CD4-positive, alpha-beta T cell (primary cell): ENCODE measurements at regions of chr10 and their contacts with region 1.

Region 1: GRCh38 chr10:32556783-32557395 is 110.9 kb downstream of the CCDC7 start:
- DNase-seq: no peak
- ATAC-seq: no peak
- H3K4me3 ChIP-seq: no peak overlapping the region
- H3K4me3 Mint-ChIP-seq: no peak overlapping the region
- H3K27ac ChIP-seq: no peak overlapping the region
- H3K27ac Mint-ChIP-seq: no peak overlapping the region
- H3K4me1 ChIP-seq: no peaks in the 10 kb centered on the region
- H3K4me1 Mint-ChIP-seq: peaks cover 13% of the 10 kb centered on the region
- H3K27me3 ChIP-seq: no peaks in the 10 kb centered on the region
- H3K27me3 Mint-ChIP-seq: no peaks in the 10 kb centered on the region
- CTCF ChIP-seq: no peak

Region 2: GRCh38 chr10:31908157-31908556 is 648.7 kb before region 1 on chr10:
- CTCF ChIA-PET with region 1: no interaction called
- POLR2A ChIA-PET with region 1: no interaction called
- intact Hi-C with region 1: no loop called
- DNase-seq: no peak
- ATAC-seq: no peak
- H3K4me3 ChIP-seq: no peak overlapping the region
- H3K4me3 Mint-ChIP-seq: no peak overlapping the region
- H3K27ac ChIP-seq: no peak overlapping the region
- H3K27ac Mint-ChIP-seq: no peak overlapping the region
- H3K4me1 ChIP-seq: peaks cover 4% of the 10 kb centered on the region
- H3K4me1 Mint-ChIP-seq: peaks cover 84% of the 10 kb centered on the region
- H3K27me3 ChIP-seq: no peaks in the 10 kb centered on the region
- H3K27me3 Mint-ChIP-seq: no peaks in the 10 kb centered on the region
- CTCF ChIP-seq: no peak

Region 3: DNA sequence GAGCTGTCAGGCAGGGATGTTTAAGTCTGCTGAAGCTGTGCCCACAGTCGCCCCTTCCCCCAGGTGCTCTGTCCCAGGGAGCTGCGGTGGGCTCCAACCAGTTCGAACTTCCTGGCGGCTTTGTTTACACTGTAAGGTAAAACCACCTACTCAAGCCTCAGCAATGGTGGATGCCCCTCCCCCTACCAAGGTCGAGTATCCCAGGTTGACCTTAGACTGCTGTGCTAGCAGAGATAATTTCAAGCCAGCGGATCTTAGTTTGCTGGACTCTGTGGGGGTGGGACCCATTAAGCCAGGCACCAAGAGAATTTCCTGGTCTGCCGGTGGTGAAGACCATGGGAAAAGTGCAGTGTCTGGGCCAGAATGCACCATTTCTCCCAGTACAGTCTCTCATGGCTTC is 55.0 kb before region 1 on chr10:
- CTCF ChIA-PET with region 1: no interaction called
- POLR2A ChIA-PET with region 1: no interaction called
- intact Hi-C with region 1: loop called in 1 of 2 experiments (anchors 10 kb)
- DNase-seq: no peak
- ATAC-seq: no peak
- H3K4me3 ChIP-seq: no peak overlapping the region
- H3K4me3 Mint-ChIP-seq: no peak overlapping the region
- H3K27ac ChIP-seq: no peak overlapping the region
- H3K27ac Mint-ChIP-seq: no peak overlapping the region
- H3K4me1 ChIP-seq: no peaks in the 10 kb centered on the region
- H3K4me1 Mint-ChIP-seq: peaks cover 18% of the 10 kb centered on the region
- H3K27me3 ChIP-seq: no peaks in the 10 kb centered on the region
- H3K27me3 Mint-ChIP-seq: no peaks in the 10 kb centered on the region
- CTCF ChIP-seq: no peak